Activated CD8-positive, alpha-beta memory T cell treated with anti-CD3 and anti-CD28 coated beads, Interleukin-2, amount 10 ng/mL, durations not matched to agents 7 days and 5 days (primary cell): ENCODE measurements at regions of chr11 and their contacts with region 1.

Region 1: DNA sequence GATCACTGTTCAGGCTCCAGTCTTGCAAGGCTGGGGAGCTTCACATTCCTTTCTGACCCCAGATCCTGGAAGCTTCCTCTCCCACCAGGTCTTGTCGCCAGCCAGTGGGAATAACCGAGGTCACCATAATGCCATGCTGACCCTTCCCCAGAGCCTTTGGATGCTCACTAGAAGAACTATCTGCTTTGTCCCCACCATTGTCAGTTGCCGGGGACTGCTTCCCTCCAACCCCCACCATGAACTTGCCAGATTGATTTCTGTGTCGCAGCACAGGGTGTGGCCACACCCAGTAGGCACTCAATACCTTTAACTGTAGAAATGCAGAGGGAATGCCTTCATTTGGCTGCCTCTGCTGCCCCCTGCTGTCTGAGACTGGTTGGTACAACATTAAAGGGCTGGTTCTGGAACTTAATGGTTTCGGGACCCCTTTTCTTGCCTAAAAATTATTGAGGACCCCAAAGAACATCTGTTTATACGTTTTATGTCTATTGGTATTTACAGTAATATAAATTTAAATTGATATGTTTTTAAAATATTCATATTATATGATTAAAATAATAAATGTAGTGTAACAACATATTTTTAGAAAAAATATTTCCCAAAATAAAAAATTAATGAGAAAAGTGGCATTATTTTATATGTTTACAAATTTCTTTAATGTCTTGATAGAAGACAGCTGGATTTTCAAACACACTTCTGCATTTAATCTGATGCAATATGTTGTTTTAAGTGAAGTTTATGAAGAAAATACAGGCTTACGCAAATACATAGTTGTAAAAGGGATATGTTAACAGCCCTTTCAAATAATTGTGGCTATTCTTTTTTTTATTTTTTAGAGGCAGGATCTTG is 6.7 kb upstream of the GDPD5 start:
- DNase-seq: peak; percentile 89
- ATAC-seq: peak; percentile 75
- H3K4me3 Mint-ChIP-seq: peak overlapping the region; percentile 14
- H3K27ac Mint-ChIP-seq: peak overlapping the region; percentile 76
- H3K4me1 Mint-ChIP-seq: peaks cover 59% of the 10 kb centered on the region
- H3K27me3 Mint-ChIP-seq: peaks cover 16% of the 10 kb centered on the region

Region 2: DNA sequence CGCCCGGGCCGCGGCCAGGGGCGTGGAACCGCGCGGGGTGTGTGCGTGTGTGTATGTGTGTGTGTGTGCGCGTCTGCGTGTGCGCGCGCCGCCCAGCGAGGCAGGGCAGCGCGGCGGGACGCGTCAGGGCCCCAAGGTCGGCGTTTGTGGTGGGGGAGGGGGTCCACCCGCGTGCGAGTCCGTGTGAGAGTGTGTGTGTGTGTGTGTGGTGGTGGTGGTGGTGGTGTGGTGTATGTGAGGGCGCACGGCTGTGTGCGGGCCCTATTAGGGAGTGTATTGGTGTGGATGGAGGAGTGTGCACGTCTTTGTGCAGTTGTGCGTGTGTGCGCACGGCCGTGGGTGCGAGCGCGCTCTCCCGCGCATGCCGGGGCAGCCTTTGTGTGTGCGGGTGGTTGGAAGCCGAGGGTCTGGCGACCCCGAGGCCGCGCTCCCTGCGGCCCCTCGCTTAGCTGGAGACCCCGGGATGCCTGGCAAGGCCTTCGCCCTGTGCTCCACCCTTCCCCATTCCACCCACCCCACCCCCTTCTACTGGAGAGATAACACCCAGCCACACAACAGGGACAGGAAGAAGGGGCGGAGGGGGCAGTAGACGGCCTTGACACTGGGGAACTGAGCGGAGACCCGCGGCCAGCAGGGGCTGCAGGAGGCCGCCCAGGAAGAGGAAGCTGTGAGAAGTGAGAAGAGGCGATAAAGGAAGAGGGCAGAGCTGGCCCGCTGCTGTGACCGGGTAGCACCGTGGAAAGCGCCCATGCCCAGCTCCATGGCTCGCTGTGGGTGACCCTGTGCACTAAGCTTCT is 180.4 kb before region 1 on chr11:
- CTCF ChIA-PET with region 1: no interaction called
- DNase-seq: peak; percentile 76
- ATAC-seq: peak; percentile 72
- H3K4me3 Mint-ChIP-seq: peak overlapping the region; percentile 74
- H3K27ac Mint-ChIP-seq: peak overlapping the region; percentile 86
- H3K4me1 Mint-ChIP-seq: peaks cover 48% of the 10 kb centered on the region
- H3K27me3 Mint-ChIP-seq: no peaks in the 10 kb centered on the region

Region 3: GRCh38 chr11:75399344-75400145 is 132.9 kb before region 1 on chr11 and contains the start of gene RPS3:
- CTCF ChIA-PET with region 1: interaction called, 17 read pairs
- DNase-seq: peak; percentile 94
- ATAC-seq: peak; percentile 89
- H3K4me3 Mint-ChIP-seq: peak within 1 kb of the TSS; percentile 98
- H3K27ac Mint-ChIP-seq: peak within 1 kb of the TSS; percentile 99
- H3K4me1 Mint-ChIP-seq: peaks cover 40% of the 10 kb centered on the region
- H3K27me3 Mint-ChIP-seq: peaks cover 4% of the 10 kb centered on the region
- total RNA-seq, gene RPS3: 2,848 to 3,262 TPM

Region 4: DNA sequence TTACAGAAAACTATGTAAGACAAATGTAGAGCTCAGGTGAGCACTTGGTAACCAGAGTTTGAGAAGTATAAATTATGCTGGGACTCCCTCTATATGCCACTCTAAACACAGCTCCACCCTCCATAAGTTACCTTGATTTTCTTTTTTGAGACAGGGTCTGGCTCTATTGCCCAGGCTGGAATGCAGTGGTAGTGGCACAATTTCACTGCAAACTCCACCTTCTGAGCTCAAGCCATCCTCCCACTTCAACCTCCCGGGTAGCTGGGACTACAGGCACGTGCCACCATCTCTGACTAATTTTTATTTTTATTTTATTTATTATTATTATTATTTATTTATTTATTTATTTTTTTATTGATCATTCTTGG is 123.6 kb before region 1 on chr11:
- CTCF ChIA-PET with region 1: interaction called, 15 read pairs
- DNase-seq: no peak
- ATAC-seq: no peak
- H3K4me3 Mint-ChIP-seq: no peak overlapping the region
- H3K27ac Mint-ChIP-seq: no peak overlapping the region
- H3K4me1 Mint-ChIP-seq: peaks cover 19% of the 10 kb centered on the region
- H3K27me3 Mint-ChIP-seq: no peaks in the 10 kb centered on the region

Region 5: DNA sequence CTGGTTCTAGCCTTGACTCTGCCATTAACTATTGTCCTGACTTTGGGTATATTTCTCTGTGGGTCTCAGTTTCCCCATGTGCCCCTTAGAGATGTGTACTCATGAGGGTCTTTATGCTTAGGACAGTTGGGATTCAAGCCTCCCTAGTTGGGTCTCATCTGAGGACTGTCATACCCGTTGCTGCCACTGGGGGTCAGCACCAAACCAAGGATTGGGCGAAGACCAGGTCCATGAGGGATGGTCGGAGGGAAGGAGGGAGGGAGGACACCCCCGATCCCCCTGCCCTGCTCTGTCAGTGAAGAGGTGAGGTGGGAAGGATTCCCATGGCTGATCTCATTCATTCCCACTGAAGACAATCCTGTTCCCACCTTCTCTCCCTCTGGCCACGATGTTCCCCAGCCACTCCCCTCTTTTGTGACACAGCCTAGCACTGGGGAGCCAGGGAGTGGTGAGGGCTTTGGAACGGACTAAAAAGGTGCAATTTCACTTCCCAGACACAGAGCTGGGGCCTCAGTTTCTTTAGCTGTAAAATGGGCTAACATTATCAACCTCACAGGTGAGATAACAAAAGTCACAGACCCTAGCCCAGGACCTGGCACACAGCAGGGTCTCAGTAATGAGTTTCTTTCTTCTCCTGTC is 87.0 kb before region 1 on chr11:
- CTCF ChIA-PET with region 1: interaction called, 212 read pairs
- DNase-seq: peak; percentile 78
- ATAC-seq: peak; percentile 77
- H3K4me3 Mint-ChIP-seq: no peak overlapping the region
- H3K27ac Mint-ChIP-seq: no peak overlapping the region
- H3K4me1 Mint-ChIP-seq: no peaks in the 10 kb centered on the region
- H3K27me3 Mint-ChIP-seq: peaks cover 2% of the 10 kb centered on the region

Region 6: GRCh38 chr11:75450826-75451821 is 81.3 kb before region 1 on chr11:
- CTCF ChIA-PET with region 1: interaction called, 212 read pairs
- DNase-seq: no peak
- ATAC-seq: peak; percentile 50
- H3K4me3 Mint-ChIP-seq: no peak overlapping the region
- H3K27ac Mint-ChIP-seq: no peak overlapping the region
- H3K4me1 Mint-ChIP-seq: no peaks in the 10 kb centered on the region
- H3K27me3 Mint-ChIP-seq: peaks cover 2% of the 10 kb centered on the region

Region 7: DNA sequence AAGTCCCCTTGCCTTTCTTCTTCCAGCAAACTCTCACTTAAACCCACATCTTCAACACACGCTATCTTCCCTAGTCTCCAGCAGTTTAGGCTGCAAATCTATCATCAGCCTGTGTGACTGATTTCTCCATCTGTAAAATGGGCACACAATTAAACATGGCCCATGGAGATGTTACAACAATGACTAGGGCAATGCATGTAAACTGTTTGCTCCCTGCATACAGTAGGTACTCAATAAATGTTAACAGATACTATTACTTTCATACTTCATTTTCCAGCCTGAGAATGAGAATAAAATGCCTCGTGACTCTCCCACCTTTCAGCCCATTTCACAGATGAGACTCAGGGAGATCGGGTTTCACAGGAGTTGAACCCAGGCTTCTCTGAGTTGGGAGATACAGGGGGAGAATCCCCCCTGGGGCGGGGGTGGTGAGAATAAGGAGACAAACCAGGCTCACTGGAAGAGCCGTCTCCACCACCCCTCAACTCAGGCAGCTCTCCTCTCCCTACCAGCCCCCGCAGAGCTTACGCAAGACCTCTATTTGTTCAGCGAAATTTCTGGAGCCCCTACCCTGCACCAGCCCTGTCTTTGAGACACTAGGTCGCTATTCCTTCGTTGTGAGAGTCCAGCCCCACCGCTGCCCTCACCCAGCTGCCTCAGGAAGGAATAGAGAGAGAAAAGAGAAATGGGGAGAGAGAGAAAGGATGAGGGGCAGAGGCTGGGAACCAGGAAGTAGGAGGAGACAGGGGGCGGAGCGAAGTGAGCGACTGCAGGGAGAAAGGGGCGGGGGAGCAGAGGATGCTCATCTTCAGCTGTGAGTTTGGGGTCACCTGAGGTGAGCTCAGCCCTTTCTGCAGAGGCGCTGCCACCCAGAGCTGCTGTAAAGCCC is 57.3 kb before region 1 on chr11:
- CTCF ChIA-PET with region 1: interaction called, 13 read pairs
- DNase-seq: peak; percentile 95
- ATAC-seq: peak; percentile 92
- H3K4me3 Mint-ChIP-seq: peak overlapping the region; percentile 69
- H3K27ac Mint-ChIP-seq: peak overlapping the region; percentile 97
- H3K4me1 Mint-ChIP-seq: peaks cover 35% of the 10 kb centered on the region
- H3K27me3 Mint-ChIP-seq: no peaks in the 10 kb centered on the region

Region 8: DNA sequence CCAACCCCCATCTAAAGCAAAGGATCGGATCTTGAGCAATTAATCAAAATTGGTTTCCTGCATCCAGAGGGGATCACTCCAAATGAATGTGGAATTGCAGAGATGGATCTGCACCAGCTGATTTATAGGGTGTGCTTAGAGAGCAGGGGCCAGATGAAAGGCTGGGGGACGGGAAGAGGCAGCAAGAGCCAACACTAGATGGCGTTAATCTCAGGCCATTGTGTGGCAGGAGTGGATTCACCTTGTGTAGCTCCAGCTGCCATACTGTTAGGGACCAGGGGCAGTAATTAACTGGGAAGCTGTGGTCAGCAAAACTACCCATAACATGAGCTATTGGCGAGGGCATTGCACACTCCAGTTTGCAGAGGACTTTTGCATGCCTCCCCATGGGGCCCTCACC is 65.2 kb after region 1 on chr11:
- CTCF ChIA-PET with region 1: no interaction called
- DNase-seq: no peak
- ATAC-seq: peak; percentile 70
- H3K4me3 Mint-ChIP-seq: no peak overlapping the region
- H3K27ac Mint-ChIP-seq: no peak overlapping the region
- H3K4me1 Mint-ChIP-seq: peaks cover 4% of the 10 kb centered on the region
- H3K27me3 Mint-ChIP-seq: peaks cover 20% of the 10 kb centered on the region